ENCODE measurements at regions of chr4 and their contacts with region 1.

Region 1: DNA sequence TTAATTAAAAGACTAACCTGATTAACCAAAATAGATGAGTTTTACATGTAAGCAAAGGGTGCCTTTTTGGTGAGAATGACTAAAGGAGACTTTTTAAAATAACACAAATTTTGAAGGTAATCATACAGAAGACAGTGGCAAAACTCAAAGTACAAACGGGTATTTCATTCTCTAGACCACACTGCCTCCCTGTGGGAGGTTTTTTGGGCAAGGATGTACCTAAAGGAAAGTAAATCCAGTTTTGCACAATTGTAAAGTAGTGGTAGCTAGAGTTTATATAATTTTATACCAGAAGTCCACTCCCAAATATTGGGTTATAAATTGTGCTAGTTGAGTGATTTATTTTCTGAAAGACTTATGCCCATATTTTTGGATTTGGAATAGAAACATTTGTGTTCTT is 201.0 kb downstream of the PAPSS1 start:
- DNase-seq: peak; percentile 56
- H3K4me3 Mint-ChIP-seq: no peak overlapping the region
- H3K27ac Mint-ChIP-seq: no peak overlapping the region
- H3K4me1 Mint-ChIP-seq: no peaks in the 10 kb centered on the region
- H3K27me3 Mint-ChIP-seq: no peaks in the 10 kb centered on the region
- CTCF ChIP-seq: peak; percentile 50

Region 2: DNA sequence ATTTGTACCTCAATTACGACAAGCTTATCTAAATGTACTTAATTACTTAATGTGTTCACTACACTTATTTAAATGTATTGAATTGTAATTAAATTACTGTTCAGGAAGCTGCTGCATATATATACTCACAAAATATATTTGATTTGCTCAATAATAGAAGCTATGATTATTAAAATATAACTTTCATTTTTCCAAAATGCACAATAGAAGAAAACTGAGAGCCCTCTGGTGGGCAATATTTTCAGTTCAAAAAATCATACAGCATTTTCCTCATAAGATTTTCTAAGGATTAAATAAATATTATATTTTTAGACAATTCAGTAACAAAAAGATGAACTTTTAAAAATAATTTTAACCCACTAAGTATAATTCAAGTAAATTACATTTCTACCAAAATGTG is 700.3 kb before region 1 on chr4:
- CTCF ChIA-PET with region 1: no interaction called
- POLR2A ChIA-PET with region 1: no interaction called
- intact Hi-C with region 1: loop called (anchors 5 kb)
- DNase-seq: no peak
- H3K4me3 Mint-ChIP-seq: no peak overlapping the region
- H3K27ac Mint-ChIP-seq: no peak overlapping the region
- H3K4me1 Mint-ChIP-seq: no peaks in the 10 kb centered on the region
- H3K27me3 Mint-ChIP-seq: no peaks in the 10 kb centered on the region
- CTCF ChIP-seq: peak; percentile 24

Region 3: DNA sequence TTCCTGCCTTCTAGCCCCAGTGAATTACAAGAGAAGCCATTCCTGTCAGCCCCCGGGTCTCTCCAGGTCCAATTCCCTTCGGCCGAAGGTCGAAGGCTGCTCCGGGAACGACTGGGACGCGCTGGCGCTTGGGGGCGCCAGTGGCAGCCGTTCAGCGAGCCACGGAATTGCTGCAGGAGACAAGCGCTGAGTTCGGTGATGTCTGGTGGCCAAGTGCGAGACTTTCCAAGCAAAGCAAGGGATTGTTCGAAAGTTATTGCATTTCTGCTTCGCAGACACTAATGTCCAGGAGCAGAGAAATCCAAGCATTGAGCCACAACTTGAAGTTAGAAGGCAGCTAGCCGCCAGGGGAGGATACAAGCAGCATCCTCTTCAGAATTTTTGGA is 481.9 kb before region 1 on chr4:
- CTCF ChIA-PET with region 1: no interaction called
- POLR2A ChIA-PET with region 1: no interaction called
- intact Hi-C with region 1: loop called (anchors 5 kb)
- DNase-seq: peak; percentile 48
- H3K4me3 Mint-ChIP-seq: peak overlapping the region; percentile 91
- H3K27ac Mint-ChIP-seq: no peak overlapping the region
- H3K4me1 Mint-ChIP-seq: peaks cover 24% of the 10 kb centered on the region
- H3K27me3 Mint-ChIP-seq: peaks cover 49% of the 10 kb centered on the region
- CTCF ChIP-seq: peak; percentile 25

Region 4: GRCh38 chr4:107050525-107051135 is 468.4 kb before region 1 on chr4:
- CTCF ChIA-PET with region 1: interaction called, 5 read pairs
- POLR2A ChIA-PET with region 1: no interaction called
- intact Hi-C with region 1: loop called (anchors 2 kb)
- DNase-seq: peak; percentile 38
- H3K4me3 Mint-ChIP-seq: no peak overlapping the region
- H3K27ac Mint-ChIP-seq: no peak overlapping the region
- H3K4me1 Mint-ChIP-seq: no peaks in the 10 kb centered on the region
- H3K27me3 Mint-ChIP-seq: no peaks in the 10 kb centered on the region
- CTCF ChIP-seq: peak; percentile 59

Region 5: GRCh38 chr4:107094332-107094731 is 424.7 kb before region 1 on chr4:
- CTCF ChIA-PET with region 1: interaction called, 5 read pairs
- POLR2A ChIA-PET with region 1: no interaction called
- intact Hi-C with region 1: loop called (anchors 1 kb)
- DNase-seq: peak; percentile 45
- H3K4me3 Mint-ChIP-seq: no peak overlapping the region
- H3K27ac Mint-ChIP-seq: no peak overlapping the region
- H3K4me1 Mint-ChIP-seq: no peaks in the 10 kb centered on the region
- H3K27me3 Mint-ChIP-seq: no peaks in the 10 kb centered on the region
- CTCF ChIP-seq: peak; percentile 58

Region 6: GRCh38 chr4:107482521-107482920 is 36.5 kb before region 1 on chr4:
- CTCF ChIA-PET with region 1: no interaction called
- POLR2A ChIA-PET with region 1: no interaction called
- intact Hi-C with region 1: no loop called
- DNase-seq: no peak
- H3K4me3 Mint-ChIP-seq: no peak overlapping the region
- H3K27ac Mint-ChIP-seq: peak overlapping the region; percentile 18
- H3K4me1 Mint-ChIP-seq: no peaks in the 10 kb centered on the region
- H3K27me3 Mint-ChIP-seq: no peaks in the 10 kb centered on the region
- CTCF ChIP-seq: no peak

Region 7: DNA sequence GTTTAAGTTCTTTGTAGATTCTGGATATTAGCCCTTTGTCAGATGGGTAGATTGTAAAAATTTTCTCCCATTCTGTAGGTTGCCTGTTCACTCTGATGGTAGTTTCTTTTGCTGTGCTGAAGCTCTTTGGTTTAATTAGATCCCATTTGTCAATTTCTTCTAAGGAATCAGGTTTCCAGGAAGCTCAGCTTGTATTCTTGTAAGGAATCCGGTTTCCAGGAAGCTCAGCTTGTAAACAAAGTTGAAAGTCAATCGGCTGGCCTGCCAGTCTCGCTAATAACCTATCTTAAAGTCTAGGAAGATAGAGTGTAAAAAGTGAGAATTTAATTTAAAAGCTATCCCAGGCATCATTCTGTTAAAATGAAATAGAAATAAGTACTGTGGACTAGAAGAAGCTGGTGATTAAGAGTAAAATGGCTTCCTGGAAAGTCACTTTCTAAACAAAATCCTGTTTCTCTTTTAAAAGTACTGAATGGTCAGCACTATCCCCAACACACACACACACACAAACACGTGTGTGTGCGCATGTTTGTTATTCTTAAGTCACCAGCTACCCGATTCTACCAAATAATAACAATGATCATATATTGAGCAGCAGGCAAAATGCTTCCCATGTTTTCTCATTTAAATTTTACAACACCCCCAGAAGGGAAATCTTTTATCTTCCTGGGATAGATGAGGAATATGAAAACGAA is 29.3 kb after region 1 on chr4:
- CTCF ChIA-PET with region 1: interaction called, 10 read pairs
- POLR2A ChIA-PET with region 1: no interaction called
- intact Hi-C with region 1: no loop called
- DNase-seq: no peak
- H3K4me3 Mint-ChIP-seq: no peak overlapping the region
- H3K27ac Mint-ChIP-seq: no peak overlapping the region
- H3K4me1 Mint-ChIP-seq: peaks cover 5% of the 10 kb centered on the region
- H3K27me3 Mint-ChIP-seq: no peaks in the 10 kb centered on the region
- CTCF ChIP-seq: no peak